ENCODE measurements at regions of chr7 and their contacts with region 1.

Region 1: GRCh38 chr7:30276203-30276900 is 8.0 kb upstream of the ZNRF2 start:
- DNase-seq: peak; percentile 40 to 70
- ATAC-seq: peak; percentile 87 to 96
- H3K4me3 ChIP-seq: no peak overlapping the region
- H3K27ac ChIP-seq: no peak overlapping the region
- H3K4me1 ChIP-seq: no peaks in the 10 kb centered on the region
- CTCF ChIP-seq: peak; percentile 81
- EP300 ChIP-seq: no peak
- POLR2A ChIP-seq: no peak
- RAD21 ChIP-seq: peak; percentile 90 to 92

Region 2: GRCh38 chr7:30087371-30087770 is 189.0 kb before region 1 on chr7:
- CTCF ChIA-PET with region 1: no interaction called
- POLR2A ChIA-PET with region 1: no interaction called
- DNase-seq: no peak
- ATAC-seq: no peak
- H3K4me3 ChIP-seq: no peak overlapping the region
- H3K27ac ChIP-seq: no peak overlapping the region
- H3K4me1 ChIP-seq: peaks cover 9% of the 10 kb centered on the region; the same call in 1 of the 3 replicates
- CTCF ChIP-seq: no peak
- EP300 ChIP-seq: no peak
- POLR2A ChIP-seq: no peak
- RAD21 ChIP-seq: no peak

Region 3: GRCh38 chr7:30263090-30263710 is 13.2 kb before region 1 on chr7:
- CTCF ChIA-PET with region 1: interaction called, 13 read pairs
- POLR2A ChIA-PET with region 1: no interaction called
- DNase-seq: no peak
- ATAC-seq: no peak
- H3K4me3 ChIP-seq: no peak overlapping the region
- H3K27ac ChIP-seq: no peak overlapping the region
- H3K4me1 ChIP-seq: no peaks in the 10 kb centered on the region
- CTCF ChIP-seq: no peak
- EP300 ChIP-seq: no peak
- POLR2A ChIP-seq: no peak
- RAD21 ChIP-seq: no peak

Region 4: GRCh38 chr7:30412810-30413504 is 136.6 kb after region 1 on chr7:
- CTCF ChIA-PET with region 1: interaction called, 107 read pairs
- POLR2A ChIA-PET with region 1: no interaction called
- DNase-seq: peak; percentile 66 to 85
- ATAC-seq: peak; percentile 97
- H3K4me3 ChIP-seq: no peak overlapping the region
- H3K27ac ChIP-seq: no peak overlapping the region
- H3K4me1 ChIP-seq: no peaks in the 10 kb centered on the region
- CTCF ChIP-seq: peak; percentile 75
- EP300 ChIP-seq: no peak
- POLR2A ChIP-seq: no peak
- RAD21 ChIP-seq: peak; percentile 85 to 88

Region 5: GRCh38 chr7:30556840-30557239 is 280.5 kb after region 1 on chr7:
- CTCF ChIA-PET with region 1: interaction called, 86 read pairs
- POLR2A ChIA-PET with region 1: no interaction called
- DNase-seq: no peak
- ATAC-seq: no peak
- H3K4me3 ChIP-seq: no peak overlapping the region
- H3K27ac ChIP-seq: no peak overlapping the region
- H3K4me1 ChIP-seq: peaks cover 4% of the 10 kb centered on the region; the same call in 1 of the 3 replicates
- CTCF ChIP-seq: no peak
- EP300 ChIP-seq: no peak
- POLR2A ChIP-seq: no peak
- RAD21 ChIP-seq: no peak